ENCODE measurements at regions of chr21 and their contacts with region 1.

Region 1: GRCh38 chr21:31293986-31294385 is 50.1 kb downstream of the TIAM1 start:
- DNase-seq: no peak
- H3K4me3 Mint-ChIP-seq: peak overlapping the region; percentile 56
- H3K27ac Mint-ChIP-seq: peak overlapping the region; percentile 86
- H3K4me1 Mint-ChIP-seq: peaks cover 35% of the 10 kb centered on the region
- H3K27me3 Mint-ChIP-seq: no peaks in the 10 kb centered on the region

Region 2: GRCh38 chr21:31235671-31236521 is 58.1 kb before region 1 on chr21:
- intact Hi-C with region 1: loop called (anchors 5 kb)
- DNase-seq: no peak
- H3K4me3 Mint-ChIP-seq: no peak overlapping the region
- H3K27ac Mint-ChIP-seq: no peak overlapping the region
- H3K4me1 Mint-ChIP-seq: peaks cover 35% of the 10 kb centered on the region
- H3K27me3 Mint-ChIP-seq: no peaks in the 10 kb centered on the region

Region 3: DNA sequence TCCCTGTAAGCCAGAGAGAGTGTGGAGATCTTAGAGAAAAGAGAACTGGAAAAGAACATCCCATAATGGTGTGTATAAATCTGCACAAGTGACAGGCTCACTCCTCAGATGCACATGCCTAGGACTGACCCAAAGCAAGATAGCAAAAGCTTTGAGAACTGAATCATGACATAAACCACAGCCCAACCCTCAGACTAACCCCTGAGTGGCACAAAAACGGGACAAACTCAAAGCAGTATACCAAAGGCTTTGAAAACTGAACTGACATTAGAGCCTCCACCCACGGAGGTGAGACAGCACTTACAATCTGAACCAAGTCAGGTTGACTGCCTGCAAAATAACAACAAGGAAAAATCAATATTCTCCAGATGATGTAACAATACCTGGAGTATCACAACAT is 20.7 kb before region 1 on chr21:
- intact Hi-C with region 1: loop called (anchors 2 kb)
- DNase-seq: no peak
- H3K4me3 Mint-ChIP-seq: no peak overlapping the region
- H3K27ac Mint-ChIP-seq: peak overlapping the region; percentile 46
- H3K4me1 Mint-ChIP-seq: peaks cover 23% of the 10 kb centered on the region
- H3K27me3 Mint-ChIP-seq: no peaks in the 10 kb centered on the region

Region 4: GRCh38 chr21:31326522-31327242 is 32.7 kb after region 1 on chr21:
- intact Hi-C with region 1: loop called (anchors 1 kb)
- DNase-seq: peak; percentile 37
- H3K4me3 Mint-ChIP-seq: peak overlapping the region; percentile 37
- H3K27ac Mint-ChIP-seq: peak overlapping the region; percentile 82
- H3K4me1 Mint-ChIP-seq: peaks cover 43% of the 10 kb centered on the region
- H3K27me3 Mint-ChIP-seq: no peaks in the 10 kb centered on the region

Region 5: DNA sequence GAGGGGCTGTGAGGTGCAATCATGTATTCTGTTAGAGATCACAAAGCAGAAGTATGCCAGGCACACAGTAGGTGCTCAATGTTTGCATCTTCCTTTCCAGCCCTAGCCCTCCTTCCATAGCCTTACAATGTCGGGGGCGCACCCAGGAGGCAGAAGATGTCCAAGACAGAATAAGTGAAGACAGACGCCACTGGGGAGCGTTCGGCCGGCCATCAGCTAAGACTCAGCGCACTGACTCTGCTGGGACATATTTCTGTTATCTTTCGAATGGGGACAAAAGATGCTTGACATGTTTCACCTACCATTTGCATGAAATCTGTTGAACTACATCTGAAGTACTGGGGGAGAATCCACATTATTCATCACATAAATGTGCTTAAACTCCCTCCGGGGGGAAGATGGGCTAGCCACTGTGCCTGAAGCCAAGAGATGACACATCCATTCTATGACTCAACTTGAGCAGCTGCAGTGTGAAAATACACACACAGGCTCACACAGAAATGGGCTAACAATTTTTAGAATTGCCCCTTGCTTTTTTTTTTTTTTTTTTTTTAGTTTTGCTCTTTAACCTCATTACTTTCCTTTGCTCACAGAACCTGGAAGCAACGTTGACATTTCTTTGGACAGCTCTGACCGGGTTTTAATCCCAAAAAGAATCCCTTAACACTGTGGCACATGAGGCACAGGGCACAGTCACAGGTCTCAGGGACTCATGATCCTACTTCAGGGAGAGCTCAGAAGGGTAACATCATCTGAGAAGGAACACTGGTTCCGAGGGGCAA is 42.2 kb after region 1 on chr21:
- intact Hi-C with region 1: loop called (anchors 1 kb)
- DNase-seq: no peak
- H3K4me3 Mint-ChIP-seq: peak overlapping the region; percentile 17
- H3K27ac Mint-ChIP-seq: peak overlapping the region; percentile 67
- H3K4me1 Mint-ChIP-seq: peaks cover 78% of the 10 kb centered on the region
- H3K27me3 Mint-ChIP-seq: no peaks in the 10 kb centered on the region

Region 6: DNA sequence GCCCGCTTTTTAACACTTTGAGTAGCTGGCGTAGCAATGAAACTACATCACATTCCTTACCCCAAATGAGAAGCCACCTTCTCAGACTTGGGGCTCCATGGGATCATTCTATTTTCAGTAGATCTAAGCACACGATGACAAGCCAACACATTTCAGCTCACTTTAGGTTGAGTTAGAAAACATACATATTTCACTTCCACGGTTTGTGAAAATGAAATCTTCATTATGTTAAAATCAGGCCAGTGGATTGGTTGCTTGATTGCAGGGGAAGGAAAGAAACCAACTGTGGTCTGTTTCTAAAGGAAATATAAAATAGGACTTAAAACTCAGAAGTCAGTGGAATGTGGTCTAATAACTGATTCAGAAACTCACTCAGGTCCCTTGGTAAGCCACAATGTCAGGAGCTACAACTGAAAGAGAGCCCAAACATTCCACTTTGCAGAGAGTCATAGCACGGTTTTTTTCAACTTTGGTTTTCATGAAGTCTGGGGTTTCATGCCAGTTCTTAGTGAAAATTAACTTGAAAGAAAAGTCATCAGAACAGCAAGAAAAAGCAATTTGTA is 132.3 kb after region 1 on chr21:
- intact Hi-C with region 1: loop called (anchors 1 kb)
- DNase-seq: peak; percentile 2
- H3K4me3 Mint-ChIP-seq: peak overlapping the region; percentile 50
- H3K27ac Mint-ChIP-seq: peak overlapping the region; percentile 64
- H3K4me1 Mint-ChIP-seq: peaks cover 16% of the 10 kb centered on the region
- H3K27me3 Mint-ChIP-seq: peaks cover 10% of the 10 kb centered on the region

Measured in activated T-helper 1 cell treated with anti-CD3 and anti-CD28 coated beads, Interleukin-12 subunit alpha, Interleukin-12 subunit beta, Interleukin-2, Interleukin-4 antibody, amounts not matched to agents 30 ng/mL and 10 ng/mL and 1 ng/mL, durations not matched to agents 14 hours and 24 hours and 36 hours (primary cell).